A549 (cell line): ENCODE measurements at regions of chr2 and their contacts with region 1.

Region 1: DNA sequence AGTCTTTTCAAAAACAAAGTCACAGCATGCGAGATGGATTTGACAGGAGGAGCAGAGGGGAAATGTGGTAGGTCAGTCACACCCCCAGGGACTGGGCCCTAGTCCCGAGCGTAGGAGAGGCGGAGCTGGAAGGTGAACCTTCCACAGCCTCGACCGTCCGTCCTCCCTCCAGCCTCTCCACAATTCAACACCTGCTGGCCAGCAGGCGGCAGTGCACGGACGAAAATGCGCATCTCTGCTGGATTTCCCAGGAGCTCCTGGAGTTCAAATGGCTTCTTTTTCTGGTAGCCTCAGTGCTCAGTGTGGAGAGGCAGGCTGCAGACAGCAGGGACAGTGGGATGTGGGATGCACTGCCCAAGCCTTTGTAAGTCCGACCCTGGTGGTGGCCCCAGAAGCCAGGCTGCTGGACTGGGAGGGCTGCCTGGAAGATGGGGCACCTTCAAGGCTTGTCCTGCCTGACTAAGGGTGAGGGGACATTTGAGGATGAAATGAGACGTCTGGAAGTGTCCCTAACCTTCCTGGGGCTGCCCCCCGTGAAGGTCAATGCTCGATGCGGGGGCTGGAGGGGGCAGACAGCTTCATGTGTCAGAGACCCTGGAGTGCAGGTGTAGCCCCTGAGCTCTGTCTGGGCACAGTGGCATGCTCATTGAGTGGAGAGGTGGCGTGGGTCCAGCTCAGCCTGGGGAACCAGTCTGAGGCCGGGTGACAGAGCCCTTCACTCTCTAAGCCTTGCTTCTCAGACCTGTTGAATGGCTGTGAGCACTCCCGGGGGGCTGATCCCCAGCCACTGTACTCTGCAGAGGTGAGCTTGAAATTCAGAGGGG is 189.5 kb downstream of the TFCP2L1 start:
- DNase-seq: peak; percentile 79
- ATAC-seq: peak; percentile 87 to 94
- H3K4me3 ChIP-seq: no peak overlapping the region
- H3K27ac ChIP-seq: no peak overlapping the region
- H3K4me1 ChIP-seq: no peaks in the 10 kb centered on the region
- CTCF ChIP-seq: peak; percentile 78
- EP300 ChIP-seq: no peak
- POLR2A ChIP-seq: no peak
- RAD21 ChIP-seq: peak; percentile 81 to 87

Region 2: DNA sequence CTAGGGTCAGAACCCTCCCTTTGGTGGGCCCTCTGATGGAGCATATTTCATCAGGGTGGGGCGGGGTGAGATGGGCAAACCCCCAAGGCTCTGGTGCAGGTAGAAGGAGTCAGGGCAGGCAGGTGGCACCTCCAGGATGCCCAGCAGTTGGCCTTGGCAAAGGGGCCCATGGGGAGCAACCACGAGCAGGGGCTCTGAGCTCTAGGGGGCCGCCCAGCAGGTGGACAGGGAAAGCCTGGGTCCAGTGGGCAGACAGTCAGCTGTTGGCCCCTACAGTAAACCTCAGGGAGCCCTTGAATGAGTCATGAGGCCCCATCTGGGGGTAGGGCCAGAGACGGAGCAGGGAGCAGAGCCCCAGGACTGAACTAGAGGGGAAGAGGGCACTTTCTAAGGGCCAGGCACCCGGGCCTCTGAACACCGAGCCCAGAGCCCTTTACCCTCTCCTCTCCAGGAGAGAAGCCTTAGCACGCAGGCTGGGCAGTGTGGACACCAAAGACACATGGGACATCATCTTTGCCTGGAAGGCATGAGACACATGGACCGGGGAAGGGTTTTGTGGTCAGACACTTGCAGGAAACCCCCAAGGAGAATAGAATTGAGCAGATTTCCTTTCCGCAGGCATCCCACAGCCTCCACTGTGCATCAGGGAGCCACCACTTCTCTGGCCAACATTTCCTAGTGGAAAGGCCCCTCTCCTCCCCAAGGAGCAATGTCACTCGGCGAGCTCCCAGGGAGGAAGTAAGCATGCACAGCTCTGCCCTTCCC is 102.5 kb before region 1 on chr2:
- CTCF ChIA-PET with region 1: no interaction called
- POLR2A ChIA-PET with region 1: no interaction called
- DNase-seq: no peak
- ATAC-seq: no peak
- H3K4me3 ChIP-seq: no peak overlapping the region
- H3K27ac ChIP-seq: 0 out of 6 replicates have a peak overlapping the region, but pooled peaks of 1 of the 2 experiments have one; percentile 35
- H3K4me1 ChIP-seq: peaks cover 16% of the 10 kb centered on the region
- CTCF ChIP-seq: no peak
- EP300 ChIP-seq: no peak
- POLR2A ChIP-seq: no peak
- RAD21 ChIP-seq: no peak

Region 3: DNA sequence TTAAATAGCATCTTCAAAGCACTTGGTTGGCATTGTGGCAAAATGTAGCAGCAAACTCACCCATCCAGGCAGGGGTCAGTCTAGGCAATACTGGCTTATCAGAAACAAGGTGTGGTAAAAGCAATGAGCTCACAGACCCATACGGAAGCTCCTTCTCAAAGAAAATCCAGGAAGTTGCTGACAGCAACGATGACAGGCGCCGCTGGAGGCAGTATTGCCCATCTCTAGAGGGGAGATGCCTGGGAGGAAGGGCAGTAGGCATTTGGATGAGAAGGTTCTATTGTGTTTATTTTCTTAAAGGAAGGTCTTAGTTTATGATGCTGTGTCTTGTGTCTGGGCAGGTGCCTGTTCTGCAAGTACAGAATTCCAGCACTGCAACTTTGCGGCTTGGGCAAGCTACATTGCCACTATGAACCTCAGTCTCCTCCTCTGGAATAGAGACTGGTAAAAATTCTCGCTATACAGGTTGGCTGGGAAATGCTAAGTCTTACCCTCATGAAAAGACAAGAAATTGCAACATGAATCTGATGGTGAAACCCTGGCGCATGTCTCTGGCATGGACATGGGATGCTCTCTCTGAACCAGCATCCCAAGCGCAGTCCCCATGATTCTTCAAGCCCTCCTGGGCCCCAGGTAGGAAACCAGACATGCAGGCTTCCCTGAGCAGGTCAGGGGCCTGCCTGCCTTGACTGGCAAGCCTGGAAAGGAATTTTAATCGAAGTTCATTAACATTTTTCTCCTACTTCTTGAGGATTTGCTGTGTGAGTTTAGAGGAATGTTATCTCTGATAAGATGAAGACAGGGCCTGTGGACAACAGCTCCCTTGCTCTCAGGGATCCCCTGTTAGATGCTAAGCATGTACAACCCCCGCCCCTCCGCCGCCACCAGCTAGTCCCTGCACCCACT is 33.5 kb after region 1 on chr2:
- CTCF ChIA-PET with region 1: interaction called, 11 read pairs
- POLR2A ChIA-PET with region 1: no interaction called
- DNase-seq: peak; percentile 43 to 60
- ATAC-seq: peak; percentile 69 to 88; a peak in 5 of 6 replicates
- H3K4me3 ChIP-seq: no peak overlapping the region
- H3K27ac ChIP-seq: no peak overlapping the region
- H3K4me1 ChIP-seq: no peaks in the 10 kb centered on the region
- CTCF ChIP-seq: peak; percentile 59
- EP300 ChIP-seq: no peak
- POLR2A ChIP-seq: no peak
- RAD21 ChIP-seq: peak; percentile 73 to 82

Region 4: DNA sequence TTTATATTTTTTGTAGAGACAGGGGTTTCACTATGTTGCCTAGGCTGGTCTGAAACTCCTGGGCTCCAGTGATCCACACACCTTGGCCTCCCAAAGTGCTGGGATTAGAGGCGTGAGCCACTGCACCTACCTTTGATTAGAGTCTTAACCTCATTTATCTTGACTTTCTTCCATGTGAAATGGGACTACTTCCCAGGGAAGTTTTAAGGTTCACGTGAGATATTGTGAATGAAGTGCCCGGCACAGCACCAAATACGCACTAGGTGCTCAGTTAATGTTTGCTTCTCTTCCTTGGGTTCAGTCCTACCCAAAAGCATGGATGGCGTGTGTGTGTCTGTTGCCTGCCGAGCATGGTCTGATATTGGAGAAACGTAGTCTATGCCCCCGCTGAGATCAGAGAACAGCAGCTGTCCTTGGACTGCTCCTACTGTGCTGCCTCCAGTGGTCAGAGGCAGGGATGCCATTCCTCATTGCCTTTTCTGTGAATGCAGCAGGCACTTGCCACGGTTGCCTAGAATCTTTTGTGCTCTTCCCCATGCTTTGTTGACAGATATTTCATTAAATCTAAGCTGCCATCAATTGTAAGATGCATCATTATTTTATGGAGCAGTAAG is 201.9 kb after region 1 on chr2:
- CTCF ChIA-PET with region 1: interaction called, 10 read pairs
- POLR2A ChIA-PET with region 1: no interaction called
- DNase-seq: peak; percentile 50 to 73
- ATAC-seq: peak; percentile 96 to 97
- H3K4me3 ChIP-seq: no peak overlapping the region
- H3K27ac ChIP-seq: no peak overlapping the region
- H3K4me1 ChIP-seq: no peaks in the 10 kb centered on the region
- CTCF ChIP-seq: peak; percentile 53
- EP300 ChIP-seq: no peak
- POLR2A ChIP-seq: no peak
- RAD21 ChIP-seq: peak; percentile 41 to 56; a peak in 4 of 5 replicates

Region 5: DNA sequence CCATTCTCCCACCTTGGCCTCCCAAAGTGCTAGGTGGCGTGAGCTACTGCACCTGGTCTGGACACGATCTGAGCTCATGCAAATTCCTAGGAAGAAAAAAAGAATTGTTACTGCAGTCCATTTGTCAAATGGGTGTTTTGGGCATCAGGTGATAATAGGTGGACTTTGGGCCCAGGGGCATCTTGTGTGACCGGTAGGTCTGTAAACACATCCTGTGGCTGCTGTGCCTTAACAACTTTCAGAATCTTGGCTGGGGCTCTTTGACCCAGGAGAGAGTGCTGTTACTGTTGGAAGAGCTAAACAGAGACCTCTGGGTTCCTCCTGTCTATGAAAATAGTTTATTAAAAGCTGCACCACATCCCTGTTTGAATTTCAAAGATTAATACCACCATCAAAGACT is 224.5 kb after region 1 on chr2:
- CTCF ChIA-PET with region 1: interaction called, 10 read pairs
- POLR2A ChIA-PET with region 1: no interaction called
- DNase-seq: no peak
- ATAC-seq: no peak
- H3K4me3 ChIP-seq: no peak overlapping the region
- H3K27ac ChIP-seq: no peak overlapping the region
- H3K4me1 ChIP-seq: no peaks in the 10 kb centered on the region
- CTCF ChIP-seq: no peak
- EP300 ChIP-seq: no peak
- POLR2A ChIP-seq: no peak
- RAD21 ChIP-seq: no peak